HCT116 (cell line): ENCODE measurements at regions of chr14 and their contacts with region 1.

Region 1: DNA sequence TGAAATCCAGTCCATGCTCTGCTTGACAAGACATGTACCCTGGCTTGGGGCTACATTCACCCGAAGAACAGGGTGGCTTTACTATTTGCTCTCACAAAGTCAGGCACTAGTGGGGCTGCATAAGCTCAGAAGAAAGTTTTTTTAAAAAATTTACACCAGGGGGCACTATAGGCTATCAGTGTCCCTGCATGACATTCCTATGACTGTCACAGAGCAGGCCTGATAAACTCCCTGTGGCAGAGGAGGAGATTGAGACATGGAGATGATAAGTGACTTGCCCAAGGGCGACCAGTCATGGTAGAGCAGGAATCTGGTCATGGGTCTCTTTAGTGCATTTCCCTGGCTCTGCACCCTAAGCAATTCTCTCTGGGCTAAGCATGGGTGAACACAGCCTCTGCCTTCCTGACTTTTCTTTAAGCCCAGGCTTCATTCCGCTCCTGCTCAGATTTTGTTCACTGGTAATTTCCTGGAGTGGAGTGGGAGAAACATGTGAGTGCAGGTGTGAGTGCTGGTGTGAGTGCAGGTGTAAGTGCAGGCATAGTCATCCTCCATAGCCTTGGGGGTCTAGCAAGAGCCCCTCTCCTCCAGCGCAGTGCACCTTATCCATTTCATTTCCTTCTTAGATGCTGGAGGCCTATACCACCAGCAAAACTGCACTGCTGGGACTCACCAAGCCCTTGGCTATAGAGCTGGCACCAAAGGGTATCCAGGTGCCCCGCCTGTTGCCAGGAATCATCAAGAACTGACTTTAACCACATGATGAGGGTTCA is 91.6 kb downstream of the DHRS2 start:
- DNase-seq: peak; percentile 56
- ATAC-seq: peak; percentile 95
- H3K4me3 ChIP-seq: no peak overlapping the region
- H3K27ac ChIP-seq: no peak overlapping the region
- H3K4me1 ChIP-seq: peaks cover 0 to 4% of the 10 kb centered on the region in 2 experiments; a peak in 1 of 4 replicates
- H3K27me3 ChIP-seq: no peaks in the 10 kb centered on the region
- CTCF ChIP-seq: peak; percentile 43 to 62 (median 58); a peak in 4 of 6 replicates
- POLR2A ChIP-seq: no peak
- RAD21 ChIP-seq: peak; percentile 71

Region 2: DNA sequence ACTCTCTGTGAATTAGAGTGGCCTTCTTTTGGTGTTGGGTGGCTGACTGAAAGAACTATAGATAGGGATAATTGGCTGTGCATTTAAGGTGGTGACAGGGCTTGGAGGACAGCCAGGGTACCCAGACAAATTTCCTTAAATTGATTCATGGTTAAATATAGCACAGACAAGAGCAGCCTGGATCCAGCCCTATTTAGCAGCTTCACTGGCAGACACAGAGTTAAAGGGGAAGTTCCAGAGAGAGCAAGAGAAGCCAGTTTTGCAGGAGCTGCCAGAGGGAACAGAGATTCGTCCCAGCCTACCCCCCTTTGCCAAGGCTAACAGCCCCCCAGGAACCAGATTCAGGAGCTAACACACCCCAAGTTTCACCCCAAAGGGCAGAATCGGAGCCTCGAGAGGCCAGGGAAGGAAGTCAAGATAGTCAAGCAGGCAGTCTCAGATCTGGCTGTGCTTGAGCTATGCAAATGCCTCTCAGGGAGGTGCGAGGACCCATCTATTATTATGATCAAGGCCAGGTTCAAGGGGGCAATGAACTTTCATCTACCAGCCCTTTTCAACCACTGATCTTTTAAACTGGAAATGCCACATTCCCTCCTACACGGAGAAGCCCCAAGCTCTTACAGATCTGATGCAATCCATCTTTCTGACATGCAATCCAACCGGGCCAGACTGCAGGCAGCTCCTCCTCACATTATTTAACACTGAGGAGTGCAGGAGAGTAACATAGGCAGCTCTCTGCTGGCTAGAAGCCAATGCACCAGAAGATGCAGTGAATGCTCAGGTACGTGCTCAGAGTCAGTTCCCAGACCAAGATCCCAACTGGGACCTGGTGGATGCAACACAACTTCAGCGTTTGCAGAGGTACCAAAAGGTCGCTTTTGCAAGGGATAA is 33.4 kb before region 1 on chr14:
- CTCF ChIA-PET with region 1: no interaction called
- POLR2A ChIA-PET with region 1: no interaction called
- RAD21 ChIA-PET with region 1: no interaction called
- intact Hi-C with region 1: no loop called
- DNase-seq: peak; percentile 27
- ATAC-seq: no peak
- H3K4me3 ChIP-seq: no peak overlapping the region
- H3K27ac ChIP-seq: no peak overlapping the region
- H3K4me1 ChIP-seq: peaks cover 3 to 6% of the 10 kb centered on the region in 2 experiments; a peak in 1 of 4 replicates
- H3K27me3 ChIP-seq: 0 out of 2 replicates have a peak, but pooled peaks cover 6% of the 10 kb centered on the region
- CTCF ChIP-seq: no peak
- POLR2A ChIP-seq: no peak
- RAD21 ChIP-seq: no peak

Region 3: DNA sequence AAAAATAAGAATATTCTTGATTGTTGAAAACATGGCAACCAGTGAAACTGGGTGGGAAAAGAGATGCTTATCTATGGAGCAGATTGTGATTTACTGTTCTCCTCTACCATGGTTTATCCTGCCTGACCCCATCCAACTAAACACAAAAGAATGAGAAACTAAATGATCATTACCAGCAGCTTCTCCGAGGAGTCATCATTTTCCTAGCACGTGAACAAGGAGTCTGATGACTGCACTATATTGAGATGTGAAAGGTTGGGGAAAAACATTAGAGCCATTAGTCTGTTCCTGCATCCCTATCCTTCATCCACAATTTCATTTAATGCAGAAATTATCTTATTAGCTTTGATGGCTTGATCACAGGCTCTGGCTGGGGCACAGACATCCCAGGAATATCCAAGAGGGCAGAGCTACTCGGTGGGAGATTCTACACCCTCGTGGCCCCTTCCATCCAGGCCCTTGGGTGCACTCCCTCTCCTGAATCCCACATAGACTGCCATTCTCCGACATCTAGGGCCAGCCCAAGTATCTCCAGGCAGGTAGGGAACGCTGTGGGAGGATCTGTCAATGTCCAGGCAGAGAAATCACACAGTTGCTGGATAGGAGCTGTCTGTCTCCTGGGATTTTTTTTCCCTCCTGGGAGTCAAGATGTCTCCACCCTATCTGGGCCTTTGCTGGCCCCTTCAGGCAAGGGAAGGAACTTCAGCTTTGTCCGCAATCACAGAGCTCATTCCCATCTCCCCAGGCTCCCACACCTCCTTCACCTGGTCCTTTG is 182.5 kb after region 1 on chr14:
- CTCF ChIA-PET with region 1: interaction called, 21 read pairs
- POLR2A ChIA-PET with region 1: no interaction called
- RAD21 ChIA-PET with region 1: interaction called in 1 of 2 experiments, 3 read pairs
- intact Hi-C with region 1: loop called (anchors 1 kb)
- DNase-seq: peak; percentile 38
- ATAC-seq: peak; percentile 98
- H3K4me3 ChIP-seq: no peak overlapping the region
- H3K27ac ChIP-seq: no peak overlapping the region
- H3K4me1 ChIP-seq: no peaks in the 10 kb centered on the region
- H3K27me3 ChIP-seq: no peaks in the 10 kb centered on the region
- CTCF ChIP-seq: peak; percentile 83 to 93 (median 85)
- POLR2A ChIP-seq: no peak
- RAD21 ChIP-seq: peak; percentile 85

Region 4: GRCh38 chr14:23929822-23930294 is 202.1 kb after region 1 on chr14:
- CTCF ChIA-PET with region 1: no interaction called
- POLR2A ChIA-PET with region 1: no interaction called
- RAD21 ChIA-PET with region 1: no interaction called
- intact Hi-C with region 1: loop called (anchors 1 kb)
- DNase-seq: peak; percentile 59
- ATAC-seq: peak; percentile 99
- H3K4me3 ChIP-seq: no peak overlapping the region
- H3K27ac ChIP-seq: no peak overlapping the region
- H3K4me1 ChIP-seq: no peaks in the 10 kb centered on the region
- H3K27me3 ChIP-seq: no peaks in the 10 kb centered on the region
- CTCF ChIP-seq: peak; percentile 80 to 97 (median 95)
- POLR2A ChIP-seq: no peak
- RAD21 ChIP-seq: peak; percentile 69

Region 5: GRCh38 chr14:23942387-23942986 is 214.7 kb after region 1 on chr14:
- CTCF ChIA-PET with region 1: no interaction called
- POLR2A ChIA-PET with region 1: no interaction called
- RAD21 ChIA-PET with region 1: no interaction called
- intact Hi-C with region 1: no loop called
- DNase-seq: no peak
- ATAC-seq: no peak
- H3K4me3 ChIP-seq: no peak overlapping the region
- H3K27ac ChIP-seq: no peak overlapping the region
- H3K4me1 ChIP-seq: no peaks in the 10 kb centered on the region
- H3K27me3 ChIP-seq: no peaks in the 10 kb centered on the region
- CTCF ChIP-seq: no peak
- POLR2A ChIP-seq: no peak
- RAD21 ChIP-seq: no peak

Region 6: DNA sequence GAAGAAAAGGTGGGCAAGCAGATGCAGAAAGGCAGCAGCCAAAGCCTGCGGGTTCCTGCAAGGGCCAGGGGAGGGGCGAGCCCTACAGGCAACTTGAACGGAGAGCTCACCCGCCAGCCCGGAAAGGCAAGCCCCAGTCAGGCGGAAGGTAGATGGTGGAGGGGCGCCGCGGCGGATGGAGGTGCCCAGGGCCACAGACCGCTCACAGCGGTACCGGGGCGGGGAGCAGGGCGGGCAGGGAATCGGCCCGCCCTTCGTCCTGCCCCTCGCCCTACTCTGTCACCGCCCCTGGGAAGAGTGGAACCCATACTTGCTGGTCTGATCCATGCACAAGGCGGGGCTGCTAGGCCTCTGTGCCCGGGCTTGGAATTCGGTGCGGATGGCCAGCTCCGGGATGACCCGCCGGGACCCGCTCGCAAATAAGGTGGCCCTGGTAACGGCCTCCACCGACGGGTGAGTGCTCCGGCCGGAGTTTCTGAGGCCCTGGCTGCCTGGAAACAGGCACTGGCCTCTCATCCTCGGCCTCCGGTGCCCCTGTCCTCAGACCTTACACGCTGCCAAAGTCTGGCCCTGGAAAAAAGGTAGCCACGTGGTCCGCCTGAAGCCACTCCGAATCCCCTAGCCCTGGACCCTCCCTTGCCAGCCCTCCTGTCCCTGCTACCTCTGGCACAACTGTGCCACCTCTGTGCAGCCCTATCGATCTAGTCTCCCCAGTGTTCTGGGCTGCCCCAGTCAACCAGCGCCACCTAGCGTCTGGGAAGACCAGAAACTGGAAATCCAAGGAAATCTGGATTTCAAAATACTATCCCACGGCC is 225.9 kb after region 1 on chr14 and contains the start of gene DHRS4:
- CTCF ChIA-PET with region 1: no interaction called
- POLR2A ChIA-PET with region 1: no interaction called
- RAD21 ChIA-PET with region 1: no interaction called
- intact Hi-C with region 1: loop called (anchors 2 kb)
- DNase-seq: peak; percentile 67
- ATAC-seq: peak; percentile 98
- H3K4me3 ChIP-seq: peak within 1 kb of the TSS; percentile 85 to 87
- H3K27ac ChIP-seq: peak within 1 kb of the TSS; percentile 96
- H3K4me1 ChIP-seq: peaks cover 0 to 9% of the 10 kb centered on the region in 2 experiments; a peak in 2 of 4 replicates
- H3K27me3 ChIP-seq: no peaks in the 10 kb centered on the region
- CTCF ChIP-seq: peak; percentile 63 to 93 (median 92); a peak in 5 of 6 replicates
- POLR2A ChIP-seq: peak; percentile 66
- RAD21 ChIP-seq: peak; percentile 56; the same call in 1 of the 2 replicates
- total RNA-seq, gene DHRS4: 21.8 TPM